Left ventricle myocardium superior (tissue), 1 donor: ENCODE measurements at regions of chr18 and their contacts with region 1.

Region 1: GRCh38 chr18:51029694-51030536 is at the start of gene SMAD4:
- DNase-seq: peak; percentile 97
- ATAC-seq: peak; percentile 95
- total RNA-seq, gene SMAD4: 94.0 TPM

Region 2: DNA sequence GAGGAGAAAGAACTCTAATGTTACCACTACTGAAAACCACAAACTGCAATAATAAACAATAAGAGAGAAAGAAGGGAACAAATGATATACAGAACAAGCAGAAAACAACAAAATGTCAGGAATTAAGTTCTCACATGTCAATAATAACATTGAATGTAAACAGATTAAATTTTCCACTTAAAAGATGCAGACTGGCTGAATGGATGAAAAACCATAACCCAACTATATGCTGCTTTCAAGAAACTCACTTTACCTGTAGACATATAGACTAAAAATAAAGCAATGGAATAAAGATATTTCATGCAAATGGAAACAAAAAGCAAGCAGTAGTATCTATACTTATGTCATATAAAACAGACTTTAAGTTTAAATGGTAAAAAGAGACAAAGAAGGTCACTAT is 260.5 kb before region 1 on chr18:
- intact Hi-C with region 1: no loop called
- DNase-seq: no peak
- ATAC-seq: no peak

Region 3: DNA sequence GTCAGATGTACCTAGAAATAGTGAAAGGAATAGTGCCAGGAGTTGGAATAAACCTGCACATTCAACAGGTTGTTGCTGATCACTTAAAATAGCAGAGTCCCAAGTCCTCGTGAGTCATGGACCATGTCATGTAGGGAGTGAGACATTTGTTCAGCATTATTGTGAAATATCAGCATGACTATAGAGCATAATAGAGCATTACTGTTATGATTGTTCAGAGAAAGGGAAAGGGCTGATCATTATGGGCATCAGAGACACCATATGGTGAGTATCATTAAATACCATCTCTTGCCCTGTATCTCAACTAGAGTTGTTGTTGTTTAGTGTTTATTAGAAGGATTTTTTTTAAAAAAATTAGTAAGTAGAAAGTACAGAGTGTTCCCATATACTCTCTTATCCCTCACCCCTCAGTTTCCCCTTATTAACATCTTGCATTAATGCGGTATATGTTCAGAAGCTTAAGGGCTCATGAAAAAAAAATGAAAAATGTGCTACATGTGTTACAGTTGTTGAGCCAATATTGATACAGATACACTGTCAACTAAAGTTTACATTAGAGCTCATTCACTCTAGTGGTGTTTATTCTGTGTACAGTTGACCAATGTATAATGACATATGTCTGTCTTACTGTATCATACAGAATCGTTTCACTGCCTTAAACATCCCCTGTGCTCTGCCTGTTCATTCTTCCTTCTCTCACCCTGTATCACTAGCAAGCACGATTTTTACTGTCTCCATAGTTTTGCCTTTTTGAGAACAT is 56.4 kb before region 1 on chr18:
- intact Hi-C with region 1: loop called (anchors 10 kb)
- DNase-seq: no peak
- ATAC-seq: peak; percentile 70